BJ (cell line): ENCODE measurements at regions of chr1 and their contacts with region 1.

Region 1: GRCh38 chr1:102852613-102853012 is 255.7 kb downstream of the COL11A1 start:
- DNase-seq: no peak
- H3K4me3 ChIP-seq: no peak overlapping the region
- H3K27me3 ChIP-seq: no peaks in the 10 kb centered on the region
- CTCF ChIP-seq: peak; percentile 35; the same call in 1 of the 2 replicates

Region 2: DNA sequence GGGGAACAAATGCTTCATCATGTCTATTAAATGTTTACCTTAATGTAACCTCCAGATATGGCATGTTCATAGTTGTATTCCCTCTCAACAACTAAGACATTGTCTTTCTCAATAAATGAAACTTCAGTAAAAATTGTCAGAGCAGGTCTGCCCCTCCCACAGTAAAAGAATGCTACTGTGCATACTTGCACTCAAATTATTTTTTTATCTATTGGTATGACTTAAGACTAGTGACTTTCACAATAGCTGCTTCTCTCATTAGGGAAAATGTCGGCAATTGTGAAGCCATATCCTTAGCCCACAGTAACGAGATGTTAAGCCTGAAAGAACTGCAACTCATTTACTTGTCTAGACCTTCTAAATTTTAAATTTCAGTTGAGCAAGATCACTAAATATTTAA is 175.7 kb before region 1 on chr1:
- CTCF ChIA-PET with region 1: no interaction called
- POLR2A ChIA-PET with region 1: no interaction called
- DNase-seq: no peak
- H3K4me3 ChIP-seq: no peak overlapping the region
- H3K27me3 ChIP-seq: no peaks in the 10 kb centered on the region; the same call in 1 of the 2 replicates
- CTCF ChIP-seq: no peak

Region 3: GRCh38 chr1:102821707-102822106 is 30.9 kb before region 1 on chr1:
- CTCF ChIA-PET with region 1: no interaction called
- POLR2A ChIA-PET with region 1: no interaction called
- DNase-seq: no peak
- H3K4me3 ChIP-seq: no peak overlapping the region
- H3K27me3 ChIP-seq: no peaks in the 10 kb centered on the region
- CTCF ChIP-seq: no peak

Region 4: GRCh38 chr1:102842606-102843005 is 10.0 kb before region 1 on chr1:
- CTCF ChIA-PET with region 1: interaction called, 11 read pairs
- POLR2A ChIA-PET with region 1: no interaction called
- DNase-seq: no peak
- H3K4me3 ChIP-seq: no peak overlapping the region
- H3K27me3 ChIP-seq: no peaks in the 10 kb centered on the region
- CTCF ChIP-seq: no peak